ENCODE measurements at regions of chr18 and their contacts with region 1.

Region 1: GRCh38 chr18:76803814-76804213 is 18.5 kb upstream of the ZNF236 start:
- DNase-seq: peak; percentile 57
- H3K4me3 Mint-ChIP-seq: no peak overlapping the region
- H3K27ac Mint-ChIP-seq: no peak overlapping the region
- H3K4me1 Mint-ChIP-seq: peaks cover 6% of the 10 kb centered on the region
- H3K27me3 Mint-ChIP-seq: peaks cover 4% of the 10 kb centered on the region

Region 2: DNA sequence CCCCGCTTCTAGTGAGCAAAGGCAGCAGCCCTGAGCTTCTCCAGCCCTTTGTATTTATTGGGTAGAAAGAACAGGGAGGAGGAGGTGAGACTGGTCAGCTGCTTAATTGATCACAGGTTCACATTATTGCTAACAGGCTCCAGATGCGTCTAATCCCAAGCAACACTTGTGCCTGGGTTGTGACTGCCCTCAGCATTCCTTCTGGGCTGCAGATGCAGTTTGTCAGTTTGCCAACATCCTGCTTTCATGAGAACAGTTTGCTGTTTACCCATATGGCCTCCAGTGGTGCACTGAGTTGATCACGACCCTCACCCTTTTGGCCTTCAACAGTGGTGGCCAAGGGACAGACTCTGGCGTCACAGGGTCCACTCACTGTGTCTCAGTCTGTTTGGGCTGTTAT is 149.2 kb before region 1 on chr18:
- intact Hi-C with region 1: no loop called
- DNase-seq: no peak
- H3K4me3 Mint-ChIP-seq: no peak overlapping the region
- H3K27ac Mint-ChIP-seq: no peak overlapping the region
- H3K4me1 Mint-ChIP-seq: peaks cover 21% of the 10 kb centered on the region
- H3K27me3 Mint-ChIP-seq: peaks cover 61% of the 10 kb centered on the region

Region 3: DNA sequence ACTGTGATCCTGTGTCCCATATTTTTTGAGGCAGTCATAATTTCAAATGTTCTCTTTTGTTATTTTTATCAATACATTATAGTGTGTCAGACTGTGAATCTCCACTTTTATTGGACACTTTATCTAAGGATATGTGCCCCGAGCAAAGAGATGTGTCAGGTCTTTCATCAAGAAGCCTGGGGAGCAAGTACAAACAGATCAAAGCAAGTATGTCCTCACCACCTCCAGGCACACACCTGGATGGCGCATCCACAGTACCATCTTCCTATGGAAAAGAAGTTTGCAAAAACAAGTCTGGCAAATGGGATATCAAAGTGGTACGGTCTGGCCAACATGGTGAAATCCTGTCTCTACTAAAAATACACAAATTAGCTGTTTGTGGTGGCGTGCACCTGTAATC is 62.4 kb before region 1 on chr18:
- intact Hi-C with region 1: loop called (anchors 5 kb)
- DNase-seq: no peak
- H3K4me3 Mint-ChIP-seq: no peak overlapping the region
- H3K27ac Mint-ChIP-seq: no peak overlapping the region
- H3K4me1 Mint-ChIP-seq: peaks cover 12% of the 10 kb centered on the region
- H3K27me3 Mint-ChIP-seq: peaks cover 37% of the 10 kb centered on the region

Region 4: DNA sequence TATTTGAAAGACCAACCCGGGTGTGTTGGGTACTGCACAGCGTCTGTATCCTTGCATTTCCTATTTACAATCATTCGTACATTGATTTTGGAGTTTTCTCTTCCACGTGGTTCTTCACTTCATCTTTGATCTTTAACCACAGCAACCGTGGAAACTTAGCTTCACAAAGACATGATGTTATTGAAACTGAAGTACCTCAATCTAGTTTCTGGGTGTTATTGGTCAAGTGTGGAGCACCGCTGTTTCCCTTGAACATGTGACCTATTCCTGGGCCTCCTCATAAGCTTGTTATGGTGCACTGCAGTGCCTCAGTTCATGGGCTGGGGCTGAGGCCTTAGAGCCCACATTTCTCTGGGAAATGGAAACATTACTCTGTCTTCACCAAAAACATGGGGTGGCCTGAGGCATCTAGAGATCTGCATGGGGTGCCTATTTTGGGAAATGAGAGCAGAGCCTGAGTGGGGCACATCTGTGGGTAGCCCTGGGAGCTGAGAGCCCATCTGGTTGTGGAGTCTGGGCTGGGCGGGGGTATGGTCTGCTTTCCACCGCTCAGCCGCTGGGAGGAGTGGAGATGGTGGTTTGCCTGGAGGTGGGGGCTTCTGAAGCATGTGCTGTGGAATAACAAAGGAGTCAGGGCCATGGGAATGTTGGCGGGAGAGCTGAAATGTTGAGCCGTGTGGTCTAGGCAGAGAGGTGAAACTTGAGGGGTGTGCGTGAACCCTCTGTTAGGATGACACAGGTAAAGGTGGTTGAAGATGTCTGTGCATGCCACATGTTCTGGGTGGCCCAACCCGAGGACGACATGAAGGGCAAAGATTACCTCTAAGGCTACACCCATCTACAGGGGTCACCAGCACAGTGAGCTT is 55.9 kb after region 1 on chr18:
- intact Hi-C with region 1: loop called (anchors 1 kb)
- DNase-seq: peak; percentile 30
- H3K4me3 Mint-ChIP-seq: peak overlapping the region; percentile 51
- H3K27ac Mint-ChIP-seq: peak overlapping the region; percentile 93
- H3K4me1 Mint-ChIP-seq: peaks cover 44% of the 10 kb centered on the region
- H3K27me3 Mint-ChIP-seq: no peaks in the 10 kb centered on the region

Region 5: DNA sequence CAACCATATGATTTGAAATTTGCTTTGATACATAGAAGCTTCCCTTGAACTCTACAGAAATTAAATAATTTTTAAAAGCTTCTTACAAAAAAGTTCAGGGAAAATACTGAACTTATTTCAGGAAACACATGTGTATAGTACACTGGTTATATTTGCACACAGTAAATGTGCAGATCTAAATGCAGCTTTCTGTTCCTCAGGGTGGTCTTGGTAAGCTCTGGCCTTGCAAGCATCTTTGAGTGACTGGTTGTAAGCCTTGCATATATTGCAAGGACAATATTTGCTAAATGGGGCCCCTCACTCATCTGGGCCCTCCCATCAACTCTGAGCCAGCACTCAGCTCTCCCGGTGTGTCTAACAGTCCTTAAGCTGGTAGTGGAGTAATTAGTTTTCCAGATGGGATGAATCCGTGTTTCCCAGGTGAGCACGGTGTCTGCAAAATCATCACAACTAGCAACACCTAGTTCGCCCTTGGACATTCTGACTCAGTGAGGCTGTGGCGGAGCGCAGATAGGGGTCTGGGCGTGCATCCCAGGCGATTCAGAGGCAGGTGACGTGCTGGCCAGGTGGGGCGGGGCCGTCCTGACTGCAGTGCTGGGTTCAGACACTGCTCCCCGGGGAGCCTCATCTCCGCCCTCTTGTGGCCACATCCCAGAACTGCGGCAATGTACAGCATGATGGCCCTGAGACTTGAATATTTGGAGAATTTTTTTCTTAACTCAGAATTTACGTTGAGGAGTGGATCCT is 179.2 kb after region 1 on chr18:
- intact Hi-C with region 1: loop called (anchors 1 kb)
- DNase-seq: peak; percentile 80
- H3K4me3 Mint-ChIP-seq: no peak overlapping the region
- H3K27ac Mint-ChIP-seq: no peak overlapping the region
- H3K4me1 Mint-ChIP-seq: peaks cover 4% of the 10 kb centered on the region
- H3K27me3 Mint-ChIP-seq: no peaks in the 10 kb centered on the region

Region 6: GRCh38 chr18:77650799-77651385 is 847.1 kb after region 1 on chr18:
- intact Hi-C with region 1: loop called (anchors 2 kb)
- DNase-seq: peak; percentile 43
- H3K4me3 Mint-ChIP-seq: no peak overlapping the region
- H3K27ac Mint-ChIP-seq: no peak overlapping the region
- H3K4me1 Mint-ChIP-seq: peaks cover 3% of the 10 kb centered on the region
- H3K27me3 Mint-ChIP-seq: peaks cover 2% of the 10 kb centered on the region